GM10248 (cell line): ENCODE measurements at regions of chr10 and their contacts with region 1.

Region 1: DNA sequence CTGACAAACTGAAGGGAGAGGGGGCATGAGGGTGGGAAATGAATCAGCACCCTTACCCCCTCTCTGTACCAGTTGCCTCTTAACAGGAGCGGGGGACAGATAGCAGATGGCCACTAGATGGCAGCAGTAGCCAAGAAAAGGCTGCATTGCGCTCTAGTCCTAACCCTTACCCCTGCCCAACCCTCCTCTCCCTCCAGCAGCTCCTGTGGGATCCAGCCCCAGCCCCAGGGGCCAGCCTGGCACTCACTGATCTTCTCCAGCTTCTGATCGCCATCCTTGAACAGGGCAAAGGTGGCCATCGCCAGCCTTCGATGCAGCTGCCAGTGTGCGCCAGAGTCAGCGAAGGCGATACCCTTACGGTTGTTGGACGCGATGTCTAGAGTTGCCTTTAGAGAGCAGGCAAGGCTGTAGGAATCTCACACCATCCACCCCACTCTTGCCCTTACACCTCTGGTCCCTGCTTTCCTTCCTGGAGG is 2.2 kb downstream of the CYP17A1 start:
- DNase-seq: peak; percentile 83
- CTCF ChIP-seq: peak; percentile 93

Region 2: DNA sequence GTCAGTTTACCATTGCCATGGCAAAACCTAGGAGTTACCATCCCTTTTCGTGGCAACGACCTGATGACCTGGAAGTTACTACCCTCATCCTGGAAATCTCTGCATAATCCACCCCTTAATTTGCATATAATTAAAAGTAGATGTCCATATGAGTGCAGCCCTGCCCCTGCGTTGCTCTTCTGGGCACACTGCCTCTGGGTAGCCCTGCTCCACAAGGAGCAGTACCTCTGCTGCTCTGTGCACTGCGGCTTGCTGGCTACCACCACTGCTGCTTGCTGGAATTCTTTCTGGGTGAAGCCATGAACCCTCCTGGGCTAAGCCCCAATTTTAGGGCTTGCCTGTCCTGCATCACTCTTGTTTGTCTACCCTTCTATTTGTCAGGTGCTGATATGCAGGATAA is 10.4 kb before region 1 on chr10:
- CTCF ChIA-PET with region 1: interaction called, 14 read pairs
- POLR2A ChIA-PET with region 1: no interaction called
- DNase-seq: no peak
- CTCF ChIP-seq: no peak

Region 3: DNA sequence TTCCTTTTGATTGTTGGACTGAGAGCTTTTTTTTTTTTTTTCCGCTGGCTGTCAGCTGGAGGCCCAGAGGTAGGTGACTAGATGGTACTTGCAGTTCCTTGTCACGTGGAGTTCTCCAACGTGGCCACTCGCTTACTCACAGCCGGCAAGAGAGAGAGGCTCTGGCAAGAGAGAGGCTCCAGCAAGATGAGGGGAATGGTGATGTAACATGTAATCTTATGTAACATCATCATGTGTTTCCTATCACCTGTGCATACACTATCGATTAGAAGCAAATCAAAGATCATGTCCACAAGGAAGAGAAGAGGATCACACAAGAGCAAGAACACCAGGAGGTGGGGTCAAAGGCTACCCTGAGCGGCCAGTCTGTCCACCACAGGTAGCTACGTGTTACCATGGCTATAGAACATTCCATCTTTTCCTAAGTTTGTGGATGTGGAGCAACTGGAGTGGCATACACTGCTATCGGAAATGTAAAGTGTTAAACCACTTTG is 15.0 kb after region 1 on chr10:
- CTCF ChIA-PET with region 1: interaction called, 33 read pairs
- POLR2A ChIA-PET with region 1: no interaction called
- DNase-seq: no peak
- CTCF ChIP-seq: no peak

Region 4: DNA sequence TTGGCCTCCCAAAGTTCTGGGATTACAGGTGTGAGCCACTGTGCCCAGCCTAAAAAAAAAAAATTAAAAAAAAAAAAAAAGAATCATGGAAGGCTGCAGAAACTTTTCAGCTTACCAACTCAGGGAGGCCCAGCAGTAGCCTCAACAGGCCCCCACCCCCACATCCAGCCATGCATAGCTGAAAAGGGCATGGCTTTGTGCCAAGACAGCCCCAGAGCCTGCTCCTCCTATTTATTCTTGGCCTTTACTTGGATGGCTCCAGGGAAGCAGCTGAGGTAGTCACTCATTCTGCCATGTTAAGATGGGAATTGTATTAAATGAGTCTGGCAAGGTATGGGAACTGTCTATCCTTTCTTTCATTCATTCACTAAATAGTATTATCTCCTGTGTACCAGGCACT is 69.3 kb after region 1 on chr10:
- CTCF ChIA-PET with region 1: interaction called, 61 read pairs
- POLR2A ChIA-PET with region 1: no interaction called
- DNase-seq: no peak
- CTCF ChIP-seq: no peak

Region 5: DNA sequence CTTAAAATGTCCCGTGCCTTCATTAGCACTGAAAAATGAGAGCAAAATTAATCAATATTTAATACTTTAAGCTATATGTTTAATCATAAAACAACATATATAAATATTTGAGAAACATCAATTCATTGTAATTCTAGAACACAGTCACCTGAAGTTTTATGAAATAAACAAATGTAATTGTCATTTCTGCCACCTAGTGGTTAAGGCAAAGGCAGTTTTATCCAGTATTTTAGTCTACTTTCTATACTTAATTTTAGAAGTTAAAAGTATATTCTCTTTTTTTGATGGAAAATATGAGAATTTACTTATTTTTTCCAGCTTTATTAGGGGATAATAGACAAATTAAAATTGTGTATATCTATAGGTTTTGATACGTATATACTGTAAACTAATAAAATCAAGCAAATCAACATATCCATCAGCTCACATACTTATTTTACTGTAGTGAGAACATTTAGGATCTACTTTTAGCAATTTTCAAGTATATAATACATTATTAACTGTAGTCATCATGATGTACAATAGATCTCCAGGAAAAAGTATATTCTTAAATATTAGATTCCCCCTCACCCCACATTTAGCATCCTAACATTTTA is 499.0 kb after region 1 on chr10:
- CTCF ChIA-PET with region 1: interaction called, 13 read pairs
- POLR2A ChIA-PET with region 1: no interaction called
- DNase-seq: peak; percentile 35
- CTCF ChIP-seq: peak; percentile 54